ENCODE measurements at regions of chr4 and their contacts with region 1.

Region 1: GRCh38 chr4:167290678-167291077 is 56.4 kb upstream of the SPOCK3 start:
- DNase-seq: peak in 1 of 2 experiments; percentile 39
- H3K4me3 ChIP-seq: no peak overlapping the region
- H3K4me1 ChIP-seq: no peaks in the 10 kb centered on the region
- H3K27me3 ChIP-seq: no peaks in the 10 kb centered on the region

Region 2: GRCh38 chr4:166165829-166166420 is 1124.8 kb before region 1 on chr4:
- in situ Hi-C with region 1: loop called (anchors 25 kb)
- DNase-seq: peak; percentile 52 to 71
- H3K4me3 ChIP-seq: no peak overlapping the region
- H3K4me1 ChIP-seq: no peaks in the 10 kb centered on the region
- H3K27me3 ChIP-seq: no peaks in the 10 kb centered on the region

Region 3: GRCh38 chr4:166957451-166957850 is 333.2 kb before region 1 on chr4:
- in situ Hi-C with region 1: no loop called
- DNase-seq: no peak
- H3K4me3 ChIP-seq: no peak overlapping the region
- H3K4me1 ChIP-seq: no peaks in the 10 kb centered on the region
- H3K27me3 ChIP-seq: no peaks in the 10 kb centered on the region

Region 4: GRCh38 chr4:167842487-167842886 is 551.8 kb after region 1 on chr4:
- in situ Hi-C with region 1: no loop called
- DNase-seq: no peak
- H3K4me3 ChIP-seq: no peak overlapping the region
- H3K4me1 ChIP-seq: no peaks in the 10 kb centered on the region
- H3K27me3 ChIP-seq: no peaks in the 10 kb centered on the region